ENCODE measurements at regions of chr3 and their contacts with region 1.

Region 1: DNA sequence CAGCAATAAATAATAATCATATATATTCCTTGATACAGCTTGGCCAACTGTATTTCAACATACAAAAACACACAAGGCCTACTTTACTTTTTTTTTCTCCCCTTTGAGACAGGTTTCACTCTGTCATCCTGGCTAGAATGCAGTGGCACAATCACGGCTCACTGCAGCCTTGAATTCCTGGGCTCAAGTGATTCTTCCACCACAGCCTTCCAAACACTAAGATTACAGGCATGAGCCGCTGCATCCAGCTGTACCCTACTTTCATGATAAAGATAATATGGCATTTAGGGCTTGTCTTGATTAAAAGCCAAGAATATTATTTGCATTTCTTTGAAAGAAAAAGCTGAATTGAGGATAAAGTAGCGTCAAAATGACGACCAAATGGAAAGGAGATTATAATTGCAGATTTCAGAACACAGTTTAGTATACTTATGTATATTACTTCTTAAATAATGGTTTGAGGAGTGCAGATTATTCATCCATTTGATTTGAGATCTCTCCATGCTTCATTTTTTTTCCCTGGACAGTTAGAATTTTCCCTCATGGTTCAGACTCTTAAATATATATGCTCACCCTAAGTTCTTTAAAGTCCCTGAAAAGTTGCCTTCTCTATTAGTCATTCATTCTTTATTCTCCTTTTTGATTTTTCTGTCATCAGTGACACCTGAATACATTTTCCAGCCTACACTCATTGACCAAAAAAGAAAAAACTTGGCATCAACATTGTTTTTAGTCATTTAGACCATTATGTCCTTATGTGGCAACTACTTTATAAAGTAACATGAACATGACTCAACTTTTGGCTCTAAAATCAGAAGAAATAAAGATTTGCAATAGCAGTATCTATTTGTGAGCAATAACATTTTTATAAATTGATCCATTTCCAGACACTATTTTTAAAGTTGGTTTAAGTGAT is 48.5 kb upstream of the MLF1 start:
- DNase-seq: peak; percentile 27
- ATAC-seq: no peak; the same call in 1 of the 2 replicates
- H3K4me3 ChIP-seq: no peak overlapping the region
- H3K27ac ChIP-seq: no peak overlapping the region
- H3K4me1 ChIP-seq: no peaks in the 10 kb centered on the region
- H3K27me3 ChIP-seq: no peaks in the 10 kb centered on the region
- CTCF ChIP-seq: no peak

Region 2: DNA sequence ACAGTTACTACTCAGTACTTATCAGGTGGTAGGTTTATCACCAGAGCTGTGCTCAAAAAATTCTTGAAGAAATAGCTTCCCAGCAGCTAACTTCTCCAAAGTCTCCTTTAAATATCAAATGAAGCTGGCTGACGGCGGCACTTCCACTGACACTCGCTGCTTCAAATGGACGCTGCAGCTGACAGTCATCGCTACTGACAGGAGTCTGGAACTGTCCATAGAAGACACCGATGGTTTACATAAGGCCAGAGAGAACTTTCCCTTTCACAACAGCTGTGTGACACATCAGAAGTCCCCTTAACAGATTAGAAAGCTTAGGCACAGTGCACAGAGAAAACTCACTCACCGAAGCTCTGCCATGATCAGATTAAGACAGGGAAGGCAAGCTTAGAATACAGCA is 686.5 kb before region 1 on chr3:
- CTCF ChIA-PET with region 1: no interaction called
- POLR2A ChIA-PET with region 1: no interaction called
- intact Hi-C with region 1: no loop called
- DNase-seq: no peak
- ATAC-seq: no peak
- H3K4me3 ChIP-seq: no peak overlapping the region
- H3K27ac ChIP-seq: no peak overlapping the region
- H3K4me1 ChIP-seq: no peaks in the 10 kb centered on the region
- H3K27me3 ChIP-seq: no peaks in the 10 kb centered on the region
- CTCF ChIP-seq: no peak

Region 3: DNA sequence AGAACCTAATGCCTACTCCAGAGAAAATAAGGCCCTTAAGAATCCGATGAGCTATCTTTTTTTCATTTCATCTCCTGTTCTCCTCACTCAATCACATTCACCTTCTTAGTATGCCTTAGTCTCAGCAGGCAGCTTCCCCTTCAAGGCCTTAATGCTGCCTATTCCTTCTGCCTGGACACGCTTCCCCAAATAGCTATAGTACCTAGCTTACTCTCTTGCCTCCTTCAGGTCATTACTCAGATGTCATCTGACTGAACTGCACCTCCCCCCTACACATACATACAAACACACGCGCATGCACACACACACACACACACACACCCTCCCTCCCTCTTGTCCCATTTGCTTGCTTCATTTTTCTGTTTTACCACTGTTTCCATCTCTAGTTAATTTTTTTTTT is 143.0 kb before region 1 on chr3:
- CTCF ChIA-PET with region 1: no interaction called
- POLR2A ChIA-PET with region 1: interaction called, 11 read pairs
- intact Hi-C with region 1: no loop called
- DNase-seq: no peak
- ATAC-seq: no peak
- H3K4me3 ChIP-seq: no peak overlapping the region
- H3K27ac ChIP-seq: no peak overlapping the region
- H3K4me1 ChIP-seq: peaks cover 11% of the 10 kb centered on the region
- H3K27me3 ChIP-seq: no peaks in the 10 kb centered on the region
- CTCF ChIP-seq: no peak

Region 4: GRCh38 chr3:158471639-158472294 is 50.7 kb before region 1 on chr3:
- CTCF ChIA-PET with region 1: no interaction called
- POLR2A ChIA-PET with region 1: no interaction called
- intact Hi-C with region 1: loop called (anchors 5 kb)
- DNase-seq: peak; percentile 93
- ATAC-seq: peak; percentile 83
- H3K4me3 ChIP-seq: no peak overlapping the region
- H3K27ac ChIP-seq: peak overlapping the region; percentile 89
- H3K4me1 ChIP-seq: peaks cover 18% of the 10 kb centered on the region
- H3K27me3 ChIP-seq: no peaks in the 10 kb centered on the region
- CTCF ChIP-seq: no peak

Region 5: DNA sequence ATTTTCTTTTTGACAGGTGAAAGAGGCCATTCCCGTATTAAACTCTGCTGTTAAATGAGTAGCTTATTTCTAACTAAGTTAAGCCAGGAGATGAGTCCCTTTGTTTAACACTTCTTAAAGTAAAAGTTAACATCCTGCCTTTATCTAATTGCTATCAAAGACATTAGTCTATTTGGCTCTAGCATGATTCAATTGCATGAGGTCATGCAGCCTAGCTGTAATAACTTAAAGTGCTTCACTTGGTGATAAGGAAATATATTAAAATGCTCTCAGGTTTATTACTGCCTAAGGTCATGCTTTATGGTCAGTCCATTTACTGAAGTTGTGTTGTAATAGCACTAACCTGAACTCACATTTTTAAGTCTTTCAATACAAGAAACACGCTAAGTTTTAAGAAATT is 33.8 kb before region 1 on chr3:
- CTCF ChIA-PET with region 1: no interaction called
- POLR2A ChIA-PET with region 1: no interaction called
- intact Hi-C with region 1: loop called (anchors 5 kb)
- DNase-seq: no peak
- ATAC-seq: no peak
- H3K4me3 ChIP-seq: no peak overlapping the region
- H3K27ac ChIP-seq: no peak overlapping the region
- H3K4me1 ChIP-seq: peaks cover 17% of the 10 kb centered on the region
- H3K27me3 ChIP-seq: no peaks in the 10 kb centered on the region
- CTCF ChIP-seq: no peak

Measured in PC-3 (cell line).